Posterior cingulate gyrus (tissue), 11 donors: ENCODE measurements at regions of chr5 and their contacts with region 1.

Region 1: GRCh38 chr5:124748687-124749594 is 2.5 kb upstream of the ZNF608 start:
- DNase-seq: peak; percentile 46 to 96 (median 82)

Region 2: GRCh38 chr5:124206540-124206939 is 542.4 kb before region 1 on chr5:
- intact Hi-C with region 1: no loop called
- DNase-seq: no peak

Region 3: DNA sequence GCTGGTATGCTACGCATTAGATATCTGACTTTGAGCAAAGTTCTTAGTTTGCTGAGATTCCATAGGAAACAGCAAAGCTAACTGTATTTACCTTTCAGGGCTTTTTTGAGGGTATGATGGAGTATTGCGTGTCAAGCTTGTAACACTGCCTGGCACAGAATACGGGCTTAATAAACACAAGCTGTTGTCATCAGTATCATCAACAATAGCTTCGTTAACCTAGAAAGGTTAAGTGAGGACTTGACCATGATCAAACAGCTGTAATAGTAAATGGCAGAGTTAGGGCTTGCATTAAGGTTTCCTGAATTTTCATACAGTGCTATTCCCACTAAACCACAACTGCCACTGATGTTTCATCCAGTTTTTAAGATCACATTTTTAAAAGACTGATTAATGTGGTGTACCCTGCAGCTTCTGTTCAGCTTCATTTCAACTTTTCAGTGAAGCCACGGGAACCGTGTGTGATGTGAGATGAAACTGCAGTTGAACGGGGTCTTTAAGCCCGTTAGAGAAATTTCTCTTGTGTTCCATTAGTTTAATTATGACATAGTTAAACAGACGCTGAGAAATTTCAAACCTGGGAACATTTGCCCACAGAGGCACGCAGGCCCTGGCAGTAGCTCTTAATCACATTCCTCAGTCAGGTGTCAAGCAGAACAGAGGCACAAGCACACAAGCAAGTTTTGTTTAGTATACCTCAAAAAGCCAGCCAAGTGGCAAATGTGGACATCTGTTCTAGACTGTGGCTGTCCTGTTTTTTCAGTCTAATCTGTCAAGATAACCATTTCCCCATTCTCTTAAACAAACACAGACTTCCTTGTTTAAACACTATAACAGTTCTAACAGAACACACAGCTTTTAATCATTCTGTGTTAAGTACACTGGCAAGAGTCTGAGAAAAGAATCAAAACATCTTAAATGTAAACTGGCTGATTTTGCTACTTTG is 149.6 kb before region 1 on chr5:
- intact Hi-C with region 1: loop called (anchors 10 kb)
- DNase-seq: no peak

Region 4: DNA sequence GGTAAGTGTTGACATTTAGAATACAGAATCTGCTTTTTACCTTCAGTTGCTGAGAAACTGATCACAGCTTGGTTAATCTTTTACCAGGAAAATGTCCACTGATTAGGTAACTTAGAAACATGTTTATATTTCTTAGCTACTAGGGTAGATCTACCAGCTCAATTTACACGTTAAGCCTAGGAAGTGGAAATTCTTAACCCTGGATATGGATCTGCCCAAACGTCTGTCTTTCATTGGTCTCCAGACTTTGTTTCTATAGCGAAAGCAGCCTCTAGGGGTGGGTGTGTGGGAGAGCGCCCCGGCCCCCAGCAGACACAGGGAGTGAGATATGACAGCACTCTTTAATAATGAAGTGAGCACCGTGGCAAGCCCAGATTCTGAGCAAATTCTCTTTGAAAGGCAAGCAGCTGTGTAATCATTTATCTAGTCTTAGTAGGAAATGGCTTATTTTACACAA is 139.1 kb after region 1 on chr5:
- intact Hi-C with region 1: loop called (anchors 5 kb)
- DNase-seq: peak in 1 of 10 donors; percentile 32